Activated naive CD4-positive, alpha-beta T cell treated with anti-CD3 and anti-CD28 coated beads for 36 hours (primary cell): ENCODE measurements at regions of chr2 and their contacts with region 1.

Region 1: GRCh38 chr2:112584134-112584890 is at the start of gene CHCHD5:
- DNase-seq: peak; percentile 96
- H3K4me3 Mint-ChIP-seq: peak within 1 kb of the TSS; percentile 98
- H3K27ac Mint-ChIP-seq: peak within 1 kb of the TSS; percentile 96
- H3K4me1 Mint-ChIP-seq: peaks cover 26% of the 10 kb centered on the region
- H3K27me3 Mint-ChIP-seq: no peaks in the 10 kb centered on the region
- total RNA-seq, gene CHCHD5: 40.3 to 43.5 TPM

Region 2: DNA sequence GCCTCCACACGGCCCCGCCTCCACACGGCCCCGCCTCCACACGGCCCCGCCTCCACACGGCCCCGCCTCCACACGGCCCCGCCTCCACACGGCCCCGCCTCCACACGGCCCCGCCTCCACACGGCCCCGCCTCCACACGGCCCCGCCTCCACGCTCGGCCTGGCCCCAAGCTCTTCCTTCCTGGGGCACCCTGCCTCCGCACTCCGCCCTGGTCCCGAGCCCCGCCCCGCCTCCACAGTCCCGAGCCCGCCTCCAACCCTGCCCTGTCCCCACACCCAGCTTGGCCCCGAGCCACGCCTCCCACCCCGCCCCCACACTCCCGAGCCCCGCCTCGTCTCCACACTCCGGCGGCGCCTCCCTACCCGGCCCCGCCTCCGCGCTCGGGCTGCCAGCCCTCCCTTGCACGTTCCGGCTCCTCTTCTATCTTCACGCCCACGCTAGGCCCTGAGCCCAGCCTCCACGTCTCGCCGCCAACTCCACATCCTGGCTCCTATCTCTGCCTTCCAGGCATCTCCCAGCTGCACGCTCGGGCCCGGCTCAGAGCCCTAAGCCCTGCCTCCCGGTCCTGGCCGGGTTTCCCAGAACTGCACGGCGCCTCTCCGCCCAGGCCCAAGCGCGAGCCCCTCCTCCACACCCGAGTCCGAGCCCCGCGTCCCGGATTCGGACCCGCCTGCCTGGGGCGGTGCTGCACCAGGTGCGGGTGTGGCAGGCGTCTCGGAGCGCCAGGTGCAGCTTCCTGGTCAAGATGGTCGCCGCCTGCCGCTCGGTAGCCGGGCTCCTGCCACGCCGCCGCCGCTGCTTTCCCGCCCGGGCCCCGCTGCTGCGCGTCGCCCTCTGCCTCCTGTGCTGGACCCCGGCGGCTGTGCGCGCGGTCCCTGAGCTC is 529.2 kb before region 1 on chr2 and contains the start of gene TMEM87B:
- CTCF ChIA-PET with region 1: no interaction called
- intact Hi-C with region 1: loop called (anchors 2 kb)
- DNase-seq: peak; percentile 99
- H3K4me3 Mint-ChIP-seq: peak within 1 kb of the TSS; percentile 97
- H3K27ac Mint-ChIP-seq: peak within 1 kb of the TSS; percentile 99
- H3K4me1 Mint-ChIP-seq: peaks cover 42% of the 10 kb centered on the region
- H3K27me3 Mint-ChIP-seq: no peaks in the 10 kb centered on the region
- total RNA-seq, gene TMEM87B: 10.5 to 12.0 TPM

Region 3: DNA sequence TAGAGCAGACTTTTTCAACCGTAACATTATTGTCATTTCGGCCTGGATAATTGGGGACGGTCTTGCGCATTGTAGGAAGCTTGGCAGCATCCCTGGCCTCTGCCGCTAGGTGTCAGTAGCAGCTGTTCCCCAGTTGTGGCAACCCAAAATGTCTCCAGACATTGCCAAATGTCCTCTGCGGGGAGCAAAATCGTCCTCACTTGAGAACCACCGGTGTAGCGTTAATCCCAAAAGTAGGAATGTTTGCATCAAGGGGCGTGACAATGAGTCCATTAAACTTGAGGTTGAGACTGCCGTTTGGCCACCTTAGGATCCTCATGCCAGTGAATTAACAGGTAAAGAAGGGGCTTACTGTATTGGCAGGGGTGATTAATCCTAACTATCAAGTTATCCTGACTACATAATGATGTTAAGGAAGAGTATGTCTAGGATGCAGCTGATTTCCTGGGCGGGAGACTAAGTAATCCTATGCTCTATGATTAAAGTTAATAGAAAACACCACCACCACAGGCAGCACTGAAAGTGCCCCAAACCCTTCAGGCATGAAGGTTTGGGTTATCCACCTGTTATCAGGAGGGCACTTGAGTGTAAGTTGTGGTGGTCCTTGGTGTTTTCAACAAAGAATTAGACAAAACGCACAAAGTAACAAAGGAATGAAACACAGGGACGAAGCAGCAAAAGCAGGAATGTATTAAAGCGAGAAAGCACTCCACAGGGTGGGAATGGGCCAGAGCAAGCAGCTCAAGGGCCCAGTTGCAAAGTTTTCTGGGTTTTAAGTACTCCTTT is 324.6 kb before region 1 on chr2:
- CTCF ChIA-PET with region 1: interaction called, 3 read pairs
- intact Hi-C with region 1: loop called (anchors 1 kb)
- DNase-seq: peak; percentile 95
- H3K4me3 Mint-ChIP-seq: peak overlapping the region; percentile 54
- H3K27ac Mint-ChIP-seq: no peak overlapping the region
- H3K4me1 Mint-ChIP-seq: peaks cover 9% of the 10 kb centered on the region
- H3K27me3 Mint-ChIP-seq: no peaks in the 10 kb centered on the region

Region 4: DNA sequence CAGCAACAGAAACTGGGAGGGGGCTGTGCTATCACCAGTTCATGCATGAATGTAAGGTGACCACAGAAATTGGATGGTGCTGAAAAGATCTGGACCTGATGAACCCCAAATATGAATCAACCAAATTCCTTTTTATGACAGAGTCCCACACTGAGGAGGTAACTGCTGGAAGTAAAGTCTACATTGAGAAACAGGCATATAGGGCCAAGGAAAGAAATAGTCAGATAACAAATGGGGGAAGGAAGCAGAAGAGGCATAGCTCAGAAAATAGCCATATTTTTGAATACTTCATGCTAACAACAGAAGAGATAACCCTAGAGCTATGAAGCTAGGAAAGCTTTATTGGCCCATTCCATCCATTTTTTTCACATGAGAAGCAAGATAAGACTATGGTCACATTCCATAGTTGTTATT is 283.1 kb before region 1 on chr2:
- CTCF ChIA-PET with region 1: no interaction called
- intact Hi-C with region 1: no loop called
- DNase-seq: no peak
- H3K4me3 Mint-ChIP-seq: no peak overlapping the region
- H3K27ac Mint-ChIP-seq: no peak overlapping the region
- H3K4me1 Mint-ChIP-seq: peaks cover 14% of the 10 kb centered on the region
- H3K27me3 Mint-ChIP-seq: no peaks in the 10 kb centered on the region

Region 5: DNA sequence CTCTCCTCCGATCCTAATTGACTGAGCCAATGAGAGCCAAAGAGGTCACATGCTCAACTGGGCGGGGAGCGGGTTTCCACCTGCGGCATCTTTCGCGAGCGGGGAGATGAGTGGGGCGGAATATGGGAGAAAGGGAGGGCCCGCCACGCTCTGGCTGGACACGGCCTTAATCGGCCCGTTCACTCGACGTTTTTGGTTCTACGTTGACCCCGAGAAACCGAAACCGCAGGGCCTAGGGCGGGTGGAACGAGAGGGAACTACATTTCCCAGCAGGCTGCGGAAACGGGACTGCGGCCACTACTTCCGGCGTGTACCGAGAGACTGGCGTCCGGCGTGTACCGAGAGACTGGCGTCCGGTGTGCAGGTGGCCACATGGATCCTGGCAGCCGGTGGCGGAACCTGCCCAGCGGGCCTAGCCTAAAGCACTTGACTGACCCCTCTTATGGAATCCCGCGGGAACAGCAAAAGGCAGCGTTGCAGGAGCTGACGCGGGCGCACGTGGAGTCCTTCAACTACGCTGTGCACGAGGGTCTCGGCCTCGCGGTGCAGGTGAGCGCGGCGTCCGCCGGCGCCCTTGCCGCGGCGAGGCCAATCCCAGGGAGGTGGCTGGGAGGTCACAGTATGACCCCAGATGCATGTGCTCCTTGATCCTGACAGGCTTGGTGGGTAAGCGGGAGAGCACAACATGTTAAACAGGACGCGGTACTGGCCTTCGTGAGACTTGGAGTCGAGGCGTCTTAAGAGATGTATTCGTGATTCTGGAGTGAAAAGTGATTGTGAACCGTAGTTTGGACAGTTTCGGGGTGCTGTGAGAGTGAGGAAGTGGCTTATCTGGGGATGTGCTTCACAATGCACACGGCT is 42.0 kb before region 1 on chr2 and contains the start of gene POLR1B:
- CTCF ChIA-PET with region 1: interaction called, 7 read pairs
- intact Hi-C with region 1: loop called (anchors 1 kb)
- DNase-seq: peak; percentile 82
- H3K4me3 Mint-ChIP-seq: no peak within 1 kb of the TSS
- H3K27ac Mint-ChIP-seq: no peak within 1 kb of the TSS
- H3K4me1 Mint-ChIP-seq: peaks cover 19% of the 10 kb centered on the region
- H3K27me3 Mint-ChIP-seq: no peaks in the 10 kb centered on the region
- total RNA-seq, gene POLR1B: 34.5 to 36.1 TPM

Region 6: DNA sequence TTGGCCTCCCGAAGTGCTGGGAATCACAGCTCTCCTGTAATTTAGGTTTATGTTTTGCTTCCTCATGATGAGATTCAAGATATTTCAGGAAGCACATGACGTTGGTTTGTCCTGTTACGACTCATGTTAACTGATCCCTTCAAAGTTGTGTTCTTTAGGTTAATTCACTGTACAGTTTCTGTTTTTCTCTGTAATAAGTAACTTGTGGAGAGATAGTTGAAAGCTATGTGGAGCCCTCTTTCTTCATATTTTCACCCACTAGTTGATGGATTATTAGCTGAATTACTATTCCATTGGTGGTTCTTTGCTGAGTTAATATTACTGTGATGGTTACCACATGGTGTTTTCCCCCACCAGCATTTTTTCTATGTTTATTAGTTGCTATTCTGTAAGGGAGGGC is 18.2 kb before region 1 on chr2:
- CTCF ChIA-PET with region 1: no interaction called
- intact Hi-C with region 1: no loop called
- DNase-seq: no peak
- H3K4me3 Mint-ChIP-seq: no peak overlapping the region
- H3K27ac Mint-ChIP-seq: no peak overlapping the region
- H3K4me1 Mint-ChIP-seq: peaks cover 4% of the 10 kb centered on the region
- H3K27me3 Mint-ChIP-seq: no peaks in the 10 kb centered on the region

Region 7: GRCh38 chr2:112645310-112646101 is 61.2 kb after region 1 on chr2 and contains the start of gene SLC20A1:
- CTCF ChIA-PET with region 1: no interaction called
- intact Hi-C with region 1: loop called (anchors 1 kb)
- DNase-seq: peak; percentile 96
- H3K4me3 Mint-ChIP-seq: peak within 1 kb of the TSS; percentile 99
- H3K27ac Mint-ChIP-seq: peak within 1 kb of the TSS; percentile 89
- H3K4me1 Mint-ChIP-seq: peaks cover 51% of the 10 kb centered on the region
- H3K27me3 Mint-ChIP-seq: no peaks in the 10 kb centered on the region
- total RNA-seq, gene SLC20A1: 73.1 to 73.5 TPM